Activated naive CD4-positive, alpha-beta T cell treated with anti-CD3 and anti-CD28 coated beads for 36 hours (primary cell): ENCODE measurements at regions of chr12 and their contacts with region 1.

Region 1: DNA sequence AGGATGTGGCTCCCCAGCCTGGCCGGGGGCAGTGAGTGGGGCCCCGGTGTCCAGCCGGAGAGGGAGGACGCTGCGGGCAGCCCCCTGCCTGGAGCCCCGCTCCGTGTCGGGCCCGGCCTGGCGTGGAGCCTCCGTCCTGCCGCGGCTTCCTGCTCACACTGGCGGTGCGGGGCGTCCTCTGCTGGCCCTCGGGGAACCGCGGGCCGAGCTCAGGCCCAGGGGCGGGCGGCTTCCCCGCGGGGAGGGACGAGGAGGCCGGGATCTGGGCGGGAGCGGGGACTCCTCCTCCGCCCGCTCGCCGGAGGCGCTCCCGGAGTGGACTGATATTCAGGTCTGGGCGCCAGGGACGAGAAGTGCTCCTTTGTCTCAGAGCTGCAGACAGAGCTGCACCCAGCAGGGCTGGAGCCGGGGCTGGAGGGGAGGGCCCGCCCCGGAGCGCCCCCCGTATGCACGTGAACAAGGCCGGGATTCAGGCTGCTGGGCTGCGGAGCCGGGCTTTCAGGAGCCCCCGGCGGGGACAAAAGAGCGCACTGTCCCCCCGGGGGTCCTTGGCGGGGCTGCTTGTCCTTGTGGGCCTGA is 2.2 kb downstream of the MMP17 start:
- DNase-seq: peak; percentile 65
- H3K4me3 Mint-ChIP-seq: peak overlapping the region; percentile 43
- H3K27ac Mint-ChIP-seq: no peak overlapping the region
- H3K4me1 Mint-ChIP-seq: peaks cover 14% of the 10 kb centered on the region
- H3K27me3 Mint-ChIP-seq: peaks cover 44% of the 10 kb centered on the region

Region 2: GRCh38 chr12:131755305-131756113 is 74.9 kb before region 1 on chr12:
- CTCF ChIA-PET with region 1: interaction called, 3 read pairs
- intact Hi-C with region 1: loop called (anchors 1 kb)
- DNase-seq: peak; percentile 41
- H3K4me3 Mint-ChIP-seq: no peak overlapping the region
- H3K27ac Mint-ChIP-seq: no peak overlapping the region
- H3K4me1 Mint-ChIP-seq: peaks cover 2% of the 10 kb centered on the region
- H3K27me3 Mint-ChIP-seq: no peaks in the 10 kb centered on the region

Region 3: DNA sequence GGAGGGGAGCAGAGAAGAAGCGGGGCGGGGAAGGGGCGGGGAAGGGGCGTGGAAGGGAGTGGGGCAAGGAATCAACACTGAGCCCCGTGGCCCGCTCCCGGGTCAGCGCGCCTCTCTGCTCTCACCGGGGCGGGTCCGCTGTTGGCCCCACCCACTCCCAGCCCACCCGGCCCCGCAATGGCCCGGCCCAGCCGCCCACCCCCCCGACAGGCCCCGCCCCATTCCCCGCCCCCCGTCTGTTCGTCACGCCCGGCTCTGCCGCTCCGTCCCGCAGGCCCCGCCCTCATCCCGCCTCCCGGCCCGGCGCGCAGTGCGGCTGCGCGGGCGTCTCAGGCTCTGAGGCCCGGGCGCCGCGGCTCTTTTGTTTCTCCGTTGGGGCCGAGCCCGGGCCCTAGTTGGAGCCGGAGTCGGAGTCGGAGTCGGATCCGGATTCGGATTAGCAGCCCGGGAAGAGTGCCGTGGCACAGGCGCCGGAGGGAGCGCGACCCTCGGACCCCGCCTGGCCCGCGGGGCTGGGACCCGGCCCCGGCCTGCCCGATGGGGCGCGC is 64.0 kb after region 1 on chr12 and contains the start of gene ULK1:
- CTCF ChIA-PET with region 1: no interaction called
- intact Hi-C with region 1: loop called (anchors 2 kb)
- DNase-seq: peak; percentile 91
- H3K4me3 Mint-ChIP-seq: peak within 1 kb of the TSS; percentile 79
- H3K27ac Mint-ChIP-seq: no peak within 1 kb of the TSS
- H3K4me1 Mint-ChIP-seq: peaks cover 15% of the 10 kb centered on the region
- H3K27me3 Mint-ChIP-seq: no peaks in the 10 kb centered on the region
- total RNA-seq, gene ULK1: 13.6 to 15.6 TPM